B cell (primary cell): ENCODE measurements at regions of chr16 and their contacts with region 1.

Region 1: GRCh38 chr16:88561485-88562369 is 8.5 kb upstream of the ZC3H18 start:
- DNase-seq: peak; percentile 74
- ATAC-seq: peak; percentile 91
- H3K4me3 ChIP-seq: no peak overlapping the region
- H3K4me3 Mint-ChIP-seq: no peak overlapping the region
- H3K27ac ChIP-seq: no peak overlapping the region
- H3K27ac Mint-ChIP-seq: peak overlapping the region; percentile 26
- H3K4me1 ChIP-seq: peaks cover 3 to 12% of the 10 kb centered on the region in 2 donors
- H3K4me1 Mint-ChIP-seq: peaks cover 3% of the 10 kb centered on the region
- H3K27me3 ChIP-seq: peaks cover 0 to 16% (median 0%) of the 10 kb centered on the region in 4 experiments
- H3K27me3 Mint-ChIP-seq: peaks cover 7% of the 10 kb centered on the region
- CTCF ChIP-seq: peak; percentile 60

Region 2: GRCh38 chr16:88442727-88443576 is 118.8 kb before region 1 on chr16:
- CTCF ChIA-PET with region 1: interaction called, 23 read pairs
- POLR2A ChIA-PET with region 1: no interaction called
- intact Hi-C with region 1: loop called (anchors 1 kb)
- DNase-seq: peak; percentile 87
- ATAC-seq: peak; percentile 88
- H3K4me3 ChIP-seq: no peak overlapping the region
- H3K4me3 Mint-ChIP-seq: peak overlapping the region; percentile 21
- H3K27ac ChIP-seq: no peak overlapping the region
- H3K27ac Mint-ChIP-seq: peak overlapping the region; percentile 74
- H3K4me1 ChIP-seq: peaks cover 7 to 9% of the 10 kb centered on the region in 2 donors
- H3K4me1 Mint-ChIP-seq: peaks cover 7% of the 10 kb centered on the region
- H3K27me3 ChIP-seq: no peaks in the 10 kb centered on the region
- H3K27me3 Mint-ChIP-seq: no peaks in the 10 kb centered on the region
- CTCF ChIP-seq: peak; percentile 95

Region 3: GRCh38 chr16:88527186-88527936 is 34.4 kb before region 1 on chr16:
- CTCF ChIA-PET with region 1: no interaction called
- POLR2A ChIA-PET with region 1: no interaction called
- intact Hi-C with region 1: loop called (anchors 2 kb)
- DNase-seq: peak; percentile 76
- ATAC-seq: peak; percentile 81
- H3K4me3 ChIP-seq: no peak overlapping the region
- H3K4me3 Mint-ChIP-seq: no peak overlapping the region
- H3K27ac ChIP-seq: no peak overlapping the region
- H3K27ac Mint-ChIP-seq: no peak overlapping the region
- H3K4me1 ChIP-seq: peaks cover 0 to 6% of the 10 kb centered on the region in 2 donors
- H3K4me1 Mint-ChIP-seq: peaks cover 5% of the 10 kb centered on the region
- H3K27me3 ChIP-seq: no peaks in the 10 kb centered on the region
- H3K27me3 Mint-ChIP-seq: no peaks in the 10 kb centered on the region
- CTCF ChIP-seq: peak; percentile 90